ENCODE measurements at regions of chr21 and their contacts with region 1.

Region 1: DNA sequence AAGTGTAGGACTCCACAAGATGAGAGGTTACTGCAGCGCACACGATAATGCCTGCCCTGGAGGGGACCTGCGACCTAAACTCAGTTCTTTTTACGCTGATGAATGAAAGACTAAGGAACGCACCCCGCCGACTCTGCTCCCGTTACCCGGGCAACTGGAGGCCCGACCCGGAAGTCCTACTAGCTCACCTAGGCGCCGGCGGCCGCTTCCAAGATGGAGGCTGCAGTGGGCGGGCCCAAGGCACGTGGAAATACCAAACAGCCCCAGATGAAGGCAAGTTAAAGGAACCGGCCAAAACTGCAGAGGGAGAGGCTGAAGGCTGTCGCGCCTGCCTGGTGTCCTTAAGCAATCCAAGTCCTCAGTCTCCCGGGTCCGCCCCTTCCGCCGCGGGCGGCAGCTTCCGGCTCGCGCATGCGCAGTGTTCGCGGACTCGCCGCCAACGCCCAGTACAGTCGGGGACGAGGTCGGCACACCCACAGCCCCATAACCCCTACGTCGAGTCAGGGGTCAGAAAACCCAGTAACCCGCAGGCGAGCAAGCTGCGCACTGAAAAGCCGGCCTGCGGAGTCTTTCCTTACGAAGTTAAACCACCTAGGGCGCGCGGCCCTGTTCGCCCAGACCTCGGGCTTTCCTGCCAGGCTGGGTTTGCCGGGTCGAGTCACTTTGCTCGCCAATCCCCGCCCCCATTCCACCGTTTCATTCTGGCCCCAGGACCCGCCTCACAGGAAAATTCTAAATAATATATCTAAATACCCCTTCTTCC is at the start of gene SETD4:
- DNase-seq: peak; percentile 92
- ATAC-seq: peak; percentile 94
- H3K4me3 ChIP-seq: peak within 1 kb of the TSS; percentile 86
- H3K27ac ChIP-seq: peak within 1 kb of the TSS; percentile 70
- H3K4me1 ChIP-seq: no peaks in the 10 kb centered on the region
- H3K27me3 ChIP-seq: no peaks in the 10 kb centered on the region
- CTCF ChIP-seq: no peak
- POLR2A ChIP-seq: peak; percentile 48; the same call in 1 of the 2 replicates
- RAD21 ChIP-seq: no peak
- total RNA-seq, gene SETD4: 7.5 and 9.5 TPM in 2 replicates

Region 2: GRCh38 chr21:34915364-34915841 is 1144.9 kb before region 1 on chr21:
- CTCF ChIA-PET with region 1: no interaction called
- POLR2A ChIA-PET with region 1: no interaction called
- dilution Hi-C with region 1: no loop called
- in situ Hi-C with region 1: no loop called
- intact Hi-C with region 1: no loop called
- DNase-seq: peak; percentile 65
- ATAC-seq: peak; percentile 75
- H3K4me3 ChIP-seq: no peak overlapping the region
- H3K27ac ChIP-seq: peak overlapping the region; percentile 77; the same call in 1 of the 2 replicates
- H3K4me1 ChIP-seq: peaks cover 20% of the 10 kb centered on the region
- H3K27me3 ChIP-seq: no peaks in the 10 kb centered on the region
- CTCF ChIP-seq: no peak
- POLR2A ChIP-seq: no peak
- RAD21 ChIP-seq: no peak

Region 3: DNA sequence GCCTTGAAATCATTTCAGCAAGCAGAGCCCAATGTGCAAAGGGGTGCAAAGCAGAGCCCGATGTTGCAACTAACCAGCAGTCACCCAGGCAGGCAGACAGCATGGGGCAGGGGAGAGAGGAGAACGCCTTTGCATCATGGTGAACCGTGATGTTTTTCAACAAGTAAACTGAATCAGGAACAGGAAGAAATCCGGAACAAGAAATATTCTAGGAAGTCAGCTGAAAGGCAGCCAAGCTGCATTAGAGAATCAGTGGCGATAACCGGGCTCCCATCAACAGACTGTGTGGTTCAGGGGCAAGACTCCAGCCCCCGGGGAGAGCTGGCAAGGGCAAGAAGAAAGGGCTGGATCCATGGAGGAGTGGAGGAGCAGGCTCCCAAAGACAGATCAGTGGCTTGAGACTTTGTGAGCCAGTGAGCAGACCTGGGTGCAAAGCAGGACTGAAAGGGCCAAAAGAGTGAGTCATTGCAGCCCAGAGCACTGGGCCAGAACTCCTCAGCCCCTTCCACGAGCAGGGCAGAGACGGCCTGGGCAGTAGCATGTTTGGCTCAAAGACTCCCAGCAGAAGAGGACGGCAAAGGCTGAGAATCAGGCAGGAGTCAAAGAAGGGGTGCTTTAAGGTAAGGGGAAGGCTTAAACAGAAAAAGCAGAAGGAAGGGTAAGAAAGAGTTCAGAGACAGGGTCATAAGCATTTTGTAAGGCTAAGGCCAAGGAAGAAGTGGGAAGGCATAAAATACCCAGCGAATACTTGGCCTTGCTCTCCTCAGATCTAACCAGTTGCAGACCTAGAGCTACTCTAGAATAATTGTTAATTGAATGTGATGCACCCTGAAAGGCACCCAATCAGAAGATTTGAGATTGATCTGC is 155.0 kb before region 1 on chr21:
- CTCF ChIA-PET with region 1: no interaction called
- POLR2A ChIA-PET with region 1: no interaction called
- dilution Hi-C with region 1: no loop called
- in situ Hi-C with region 1: no loop called
- intact Hi-C with region 1: no loop called
- DNase-seq: no peak
- ATAC-seq: peak; percentile 46; the same call in 1 of the 2 replicates
- H3K4me3 ChIP-seq: no peak overlapping the region
- H3K27ac ChIP-seq: no peak overlapping the region
- H3K4me1 ChIP-seq: no peaks in the 10 kb centered on the region; the same call in 1 of the 2 replicates
- H3K27me3 ChIP-seq: peaks cover 3% of the 10 kb centered on the region; the same call in 1 of the 2 replicates
- CTCF ChIP-seq: no peak
- POLR2A ChIP-seq: no peak
- RAD21 ChIP-seq: no peak

Region 4: GRCh38 chr21:36113647-36114428 is 53.5 kb after region 1 on chr21:
- CTCF ChIA-PET with region 1: no interaction called
- POLR2A ChIA-PET with region 1: no interaction called
- dilution Hi-C with region 1: no loop called
- in situ Hi-C with region 1: no loop called
- intact Hi-C with region 1: loop called (anchors 1 kb)
- DNase-seq: no peak
- ATAC-seq: no peak
- H3K4me3 ChIP-seq: no peak overlapping the region
- H3K27ac ChIP-seq: no peak overlapping the region
- H3K4me1 ChIP-seq: 0 out of 2 replicates have a peak, but pooled peaks cover 2% of the 10 kb centered on the region
- H3K27me3 ChIP-seq: peaks cover 3% of the 10 kb centered on the region
- CTCF ChIP-seq: no peak
- POLR2A ChIP-seq: no peak
- RAD21 ChIP-seq: no peak

Region 5: DNA sequence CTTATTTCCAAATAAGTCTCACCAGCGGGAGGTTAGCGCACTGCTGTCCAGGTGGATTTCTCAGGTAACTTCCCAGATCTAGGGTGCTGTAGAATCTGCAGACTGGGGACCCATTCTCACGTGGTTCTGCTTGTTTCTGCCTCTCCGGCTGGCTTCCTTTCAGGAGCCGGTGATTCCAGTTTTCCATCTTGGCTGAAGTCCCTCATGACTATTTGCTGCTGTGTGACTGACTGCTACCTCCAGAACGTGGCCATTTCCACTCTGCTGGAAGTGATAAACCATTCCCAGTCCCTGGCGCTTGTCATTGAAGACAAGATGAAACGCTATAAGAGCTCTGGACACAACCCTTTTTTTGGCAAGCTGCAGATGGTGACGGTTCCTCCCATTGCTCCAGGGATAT is 172.3 kb after region 1 on chr21:
- CTCF ChIA-PET with region 1: no interaction called
- POLR2A ChIA-PET with region 1: no interaction called
- dilution Hi-C with region 1: no loop called
- in situ Hi-C with region 1: no loop called
- intact Hi-C with region 1: no loop called
- DNase-seq: no peak
- ATAC-seq: no peak
- H3K4me3 ChIP-seq: no peak overlapping the region
- H3K27ac ChIP-seq: no peak overlapping the region
- H3K4me1 ChIP-seq: peaks cover 2% of the 10 kb centered on the region; the same call in 1 of the 2 replicates
- H3K27me3 ChIP-seq: no peaks in the 10 kb centered on the region
- CTCF ChIP-seq: no peak
- POLR2A ChIP-seq: no peak
- RAD21 ChIP-seq: no peak